Ascending aorta (tissue), 2 donors: ENCODE measurements at regions of chr1 and their contacts with region 1.

Region 1: GRCh38 chr1:59340411-59341307 is 43.8 kb downstream of the FGGY start:
- DNase-seq: no peak
- H3K4me3 ChIP-seq: no peak overlapping the region
- H3K27ac ChIP-seq: no peak overlapping the region
- H3K4me1 ChIP-seq: no peaks in the 10 kb centered on the region
- H3K27me3 ChIP-seq: no peaks in the 10 kb centered on the region
- CTCF ChIP-seq: no peak

Region 2: GRCh38 chr1:59375321-59376220 is 34.9 kb after region 1 on chr1:
- intact Hi-C with region 1: no loop called
- DNase-seq: no peak
- H3K4me3 ChIP-seq: no peak overlapping the region
- H3K27ac ChIP-seq: no peak overlapping the region
- H3K4me1 ChIP-seq: no peaks in the 10 kb centered on the region
- H3K27me3 ChIP-seq: no peaks in the 10 kb centered on the region
- CTCF ChIP-seq: no peak

Region 3: GRCh38 chr1:59678493-59679228 is 338.0 kb after region 1 on chr1:
- intact Hi-C with region 1: loop called (anchors 10 kb)
- DNase-seq: no peak
- H3K4me3 ChIP-seq: no peak overlapping the region
- H3K27ac ChIP-seq: no peak overlapping the region
- H3K4me1 ChIP-seq: peaks cover 4 to 6% of the 10 kb centered on the region in 2 donors
- H3K27me3 ChIP-seq: no peaks in the 10 kb centered on the region
- CTCF ChIP-seq: no peak